ENCODE measurements at regions of chr4 and their contacts with region 1.

Region 1: DNA sequence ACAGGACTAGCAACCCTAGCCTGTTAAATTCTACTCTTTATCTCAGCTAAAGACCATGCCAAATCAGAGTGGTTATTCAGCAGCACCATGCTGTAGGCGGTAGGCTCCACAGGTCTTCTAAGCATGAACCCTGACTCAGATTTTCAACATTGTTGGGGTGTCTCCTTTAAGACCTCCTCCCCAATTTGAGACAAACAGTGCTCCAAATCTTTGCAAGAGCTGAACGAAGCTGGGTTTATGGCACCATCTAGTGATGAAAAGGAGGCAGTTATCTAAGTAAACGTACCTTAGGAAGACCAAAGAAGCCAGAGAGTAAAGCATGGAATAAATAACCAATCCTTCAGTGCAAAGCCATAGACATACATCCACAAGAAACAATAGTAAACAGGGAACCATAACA is 334.5 kb upstream of the SLC7A11 start:
- DNase-seq: peak; percentile 39
- ATAC-seq: peak; percentile 82
- H3K4me3 ChIP-seq: no peak overlapping the region
- H3K27ac ChIP-seq: no peak overlapping the region
- H3K4me1 ChIP-seq: no peaks in the 10 kb centered on the region
- H3K27me3 ChIP-seq: no peaks in the 10 kb centered on the region
- CTCF ChIP-seq: peak; percentile 65
- EP300 ChIP-seq: no peak
- POLR2A ChIP-seq: no peak
- RAD21 ChIP-seq: peak; percentile 52; the same call in 1 of the 2 replicates

Region 2: GRCh38 chr4:137819964-137820383 is 756.7 kb before region 1 on chr4:
- CTCF ChIA-PET with region 1: interaction called, 4 read pairs
- POLR2A ChIA-PET with region 1: no interaction called
- in situ Hi-C with region 1: no loop called
- intact Hi-C with region 1: loop called (anchors 1 kb)
- DNase-seq: peak; percentile 45
- ATAC-seq: peak; percentile 97
- H3K4me3 ChIP-seq: no peak overlapping the region
- H3K27ac ChIP-seq: no peak overlapping the region
- H3K4me1 ChIP-seq: no peaks in the 10 kb centered on the region
- H3K27me3 ChIP-seq: no peaks in the 10 kb centered on the region
- CTCF ChIP-seq: peak; percentile 78
- EP300 ChIP-seq: no peak
- POLR2A ChIP-seq: no peak
- RAD21 ChIP-seq: peak; percentile 71

Region 3: GRCh38 chr4:138182838-138183426 is 393.8 kb before region 1 on chr4:
- CTCF ChIA-PET with region 1: no interaction called
- POLR2A ChIA-PET with region 1: no interaction called
- in situ Hi-C with region 1: no loop called
- intact Hi-C with region 1: loop called (anchors 10 kb)
- DNase-seq: peak; percentile 56
- ATAC-seq: no peak
- H3K4me3 ChIP-seq: no peak overlapping the region
- H3K27ac ChIP-seq: no peak overlapping the region
- H3K4me1 ChIP-seq: no peaks in the 10 kb centered on the region
- H3K27me3 ChIP-seq: no peaks in the 10 kb centered on the region
- CTCF ChIP-seq: peak; percentile 67
- EP300 ChIP-seq: no peak
- POLR2A ChIP-seq: no peak
- RAD21 ChIP-seq: 0 out of 2 replicates have a peak, but pooled peaks have one; percentile 17

Region 4: DNA sequence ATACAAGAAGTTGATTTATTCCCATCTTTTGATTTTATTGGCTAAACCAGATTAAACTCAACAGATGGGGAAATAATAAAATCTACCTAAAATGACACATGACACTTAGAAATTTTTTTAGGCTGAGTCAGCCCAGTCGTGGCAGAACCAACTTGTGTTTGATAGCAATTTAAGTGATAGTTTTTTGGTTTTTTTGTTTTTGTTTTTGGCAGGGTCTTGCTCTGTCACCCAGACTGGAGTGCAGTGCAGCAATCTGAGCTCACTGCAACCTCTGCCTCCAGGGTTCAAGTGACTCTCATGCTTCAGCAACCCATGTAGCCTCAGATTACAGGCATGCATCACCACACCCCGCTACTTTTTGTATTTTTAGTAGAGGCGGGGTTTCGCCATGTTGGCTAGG is 68.6 kb after region 1 on chr4:
- CTCF ChIA-PET with region 1: no interaction called
- POLR2A ChIA-PET with region 1: no interaction called
- in situ Hi-C with region 1: no loop called
- intact Hi-C with region 1: no loop called
- DNase-seq: no peak
- ATAC-seq: no peak
- H3K4me3 ChIP-seq: no peak overlapping the region
- H3K27ac ChIP-seq: no peak overlapping the region
- H3K4me1 ChIP-seq: no peaks in the 10 kb centered on the region
- H3K27me3 ChIP-seq: no peaks in the 10 kb centered on the region
- CTCF ChIP-seq: no peak
- EP300 ChIP-seq: no peak
- POLR2A ChIP-seq: no peak
- RAD21 ChIP-seq: no peak

Region 5: DNA sequence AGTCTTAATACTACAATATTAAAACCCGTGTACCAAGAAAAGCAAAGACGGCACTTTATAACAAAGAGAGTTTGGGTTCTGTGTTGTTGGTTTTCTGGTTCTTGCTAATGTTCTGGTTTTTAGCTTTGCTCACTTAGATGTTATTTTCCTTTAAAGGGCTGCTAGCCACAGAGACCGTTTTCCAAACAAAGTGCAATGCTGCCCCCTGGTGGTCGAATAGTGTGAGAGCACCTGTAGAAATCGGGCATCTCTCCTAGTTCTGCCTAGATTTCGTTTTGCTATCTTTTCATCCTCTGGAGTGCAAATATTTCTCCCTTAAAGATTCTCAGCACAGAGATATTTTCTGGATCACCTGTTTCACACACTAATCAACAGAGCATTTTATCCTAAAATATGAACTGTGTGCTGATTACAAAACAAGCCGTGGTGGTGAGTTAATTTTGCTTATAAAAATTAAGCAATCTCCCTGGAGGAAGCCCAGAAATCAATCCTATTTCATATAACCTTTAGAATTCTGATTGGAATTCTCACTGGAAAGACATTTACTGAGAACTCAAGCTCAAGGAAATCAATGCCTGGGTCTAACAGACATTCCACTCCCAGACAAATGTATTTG is 104.4 kb after region 1 on chr4:
- CTCF ChIA-PET with region 1: interaction called, 6 read pairs
- POLR2A ChIA-PET with region 1: no interaction called
- in situ Hi-C with region 1: loop called (anchors 10 kb)
- intact Hi-C with region 1: loop called (anchors 1 kb)
- DNase-seq: peak; percentile 58
- ATAC-seq: peak; percentile 90
- H3K4me3 ChIP-seq: no peak overlapping the region
- H3K27ac ChIP-seq: no peak overlapping the region
- H3K4me1 ChIP-seq: no peaks in the 10 kb centered on the region
- H3K27me3 ChIP-seq: peaks cover 1 to 18% of the 10 kb centered on the region in 2 experiments; a peak in 4 of 5 replicates
- CTCF ChIP-seq: peak; percentile 83
- EP300 ChIP-seq: no peak
- POLR2A ChIP-seq: no peak
- RAD21 ChIP-seq: peak; percentile 80

Region 6: DNA sequence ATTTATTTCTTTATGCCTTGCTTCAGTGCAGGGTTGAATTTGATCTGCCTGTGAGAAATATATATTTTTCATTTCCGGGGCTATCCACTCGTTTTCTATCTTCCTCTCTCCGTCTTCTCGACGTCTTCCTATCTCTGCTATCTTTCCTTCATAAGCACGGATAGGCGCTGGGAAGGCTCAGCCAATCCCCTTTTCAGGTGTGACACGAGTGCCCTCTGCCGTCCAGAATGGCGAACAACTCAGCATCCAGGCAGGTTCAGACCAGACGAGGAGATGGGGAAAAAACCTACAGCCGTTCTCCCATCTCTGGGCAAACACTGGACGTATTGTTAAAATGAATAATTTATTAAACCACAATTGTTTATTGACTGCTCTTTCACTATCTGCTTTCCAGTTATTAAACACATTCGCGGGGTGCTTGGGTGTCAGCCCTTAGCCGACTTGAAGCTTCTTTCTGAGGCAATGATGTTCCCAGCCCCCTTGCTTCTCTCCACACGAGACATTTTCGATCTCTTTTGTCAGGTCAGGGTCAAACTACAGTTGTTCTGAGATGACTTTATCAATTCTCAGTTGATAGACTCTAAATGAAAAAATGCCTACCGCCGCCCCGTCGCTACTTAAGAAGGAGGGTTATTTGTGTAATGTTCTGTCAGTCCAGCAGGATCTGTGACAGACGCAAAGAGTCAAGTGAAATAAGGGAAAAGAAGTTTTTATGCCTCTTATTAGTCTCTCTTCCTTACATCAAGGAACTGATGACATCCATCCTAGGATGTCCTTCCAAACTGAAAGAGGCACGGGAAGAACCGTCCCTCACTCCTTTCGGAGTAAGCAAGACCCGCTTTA is 342.6 kb after region 1 on chr4:
- CTCF ChIA-PET with region 1: no interaction called
- POLR2A ChIA-PET with region 1: no interaction called
- in situ Hi-C with region 1: no loop called
- intact Hi-C with region 1: loop called (anchors 5 kb)
- DNase-seq: peak; percentile 49
- ATAC-seq: peak; percentile 99
- H3K4me3 ChIP-seq: no peak overlapping the region
- H3K27ac ChIP-seq: no peak overlapping the region
- H3K4me1 ChIP-seq: no peaks in the 10 kb centered on the region
- H3K27me3 ChIP-seq: no peaks in the 10 kb centered on the region
- CTCF ChIP-seq: peak; percentile 87
- EP300 ChIP-seq: no peak
- POLR2A ChIP-seq: no peak
- RAD21 ChIP-seq: peak; percentile 63